ENCODE measurements at regions of chr22 and their contacts with region 1.

Region 1: DNA sequence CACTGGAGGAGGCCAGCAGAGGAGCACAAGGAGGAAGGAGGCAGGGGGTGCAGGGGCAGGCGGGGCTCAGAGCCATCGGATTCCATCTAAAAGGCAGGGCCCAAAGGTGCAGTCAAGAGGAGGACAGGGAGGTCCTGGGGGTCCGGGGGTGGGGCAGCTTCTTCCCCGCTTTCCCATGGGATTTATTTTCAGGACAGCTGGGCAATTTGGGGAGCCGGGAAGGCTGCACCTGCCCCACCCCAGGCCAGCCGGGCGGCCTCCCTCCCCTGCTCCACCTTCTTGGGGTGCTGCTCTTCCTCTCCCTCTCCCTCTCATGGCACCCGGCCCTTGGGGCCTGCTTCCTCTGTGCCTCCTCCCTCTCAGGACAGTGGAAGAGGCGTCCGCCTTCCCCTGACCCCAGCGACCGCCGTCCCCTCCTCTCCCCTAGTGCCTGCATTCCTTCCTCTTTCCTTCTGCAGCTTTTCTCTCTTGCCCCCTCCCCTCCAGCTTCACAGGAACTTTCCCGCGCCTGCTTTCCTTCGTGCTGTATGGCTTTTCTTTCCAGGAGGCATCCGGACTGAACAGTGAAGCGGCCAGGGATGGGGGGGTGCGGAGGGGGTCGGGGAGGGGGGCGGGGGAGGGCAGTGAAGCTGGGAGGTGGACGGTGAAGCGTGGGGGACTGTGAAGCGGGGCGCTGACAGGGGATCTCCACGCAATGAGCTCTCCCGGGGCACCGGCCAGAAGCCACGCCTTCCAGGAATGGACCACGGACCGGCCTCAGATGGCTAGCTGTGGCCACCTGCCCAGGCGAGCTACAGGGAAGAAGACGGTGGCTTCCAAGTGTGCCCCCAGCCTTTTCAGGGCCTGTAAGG is 26.9 kb downstream of the APOBEC3H start:
- DNase-seq: no peak
- H3K4me3 ChIP-seq: no peak overlapping the region
- H3K27ac ChIP-seq: no peak overlapping the region
- H3K27me3 ChIP-seq: no peaks in the 10 kb centered on the region
- CTCF ChIP-seq: no peak

Region 2: DNA sequence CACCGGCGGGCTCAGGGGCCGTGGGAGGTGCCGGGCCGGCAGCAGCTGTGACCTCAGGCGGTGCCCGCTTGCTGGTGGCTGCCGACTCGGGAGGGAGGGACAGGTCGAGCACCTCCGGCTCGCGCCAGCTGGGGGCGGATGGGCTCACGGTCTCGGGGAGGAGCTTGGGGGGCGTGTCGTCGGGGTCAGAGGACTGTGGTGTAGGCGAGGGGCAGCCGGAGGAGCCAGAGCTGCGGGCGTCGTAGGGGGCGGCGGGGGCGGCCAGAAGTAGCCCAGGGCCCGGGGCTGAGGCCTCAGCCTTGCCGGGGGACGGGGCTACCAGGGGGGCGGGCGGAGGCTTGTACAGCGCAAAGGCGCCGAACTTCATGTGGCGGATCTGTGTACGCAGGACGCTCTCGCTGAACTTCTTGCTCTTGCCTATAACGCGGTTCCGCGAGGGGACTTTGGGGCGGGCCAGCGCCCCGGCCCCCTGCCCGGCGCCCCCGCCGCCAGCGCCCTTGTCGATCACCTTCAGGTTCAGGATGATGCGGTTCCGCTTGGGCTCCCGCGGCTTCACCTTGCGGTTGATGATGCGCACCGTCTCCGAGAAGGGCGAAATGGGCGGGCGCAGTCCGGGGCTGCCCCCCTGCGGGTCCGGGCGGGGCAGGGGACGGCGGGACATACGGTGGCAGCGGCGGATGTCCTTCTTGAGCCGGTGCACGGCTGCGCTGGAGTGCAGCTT is 257.4 kb before region 1 on chr22:
- intact Hi-C with region 1: loop called in 1 of 2 experiments (anchors 2 kb)
- DNase-seq: peak in 2 of 10 donors; percentile 27 to 40
- H3K4me3 ChIP-seq: peak overlapping the region in 9 of 59 donors; percentile 3 to 35 (median 24)
- H3K27ac ChIP-seq: peak overlapping the region in 26 of 59 donors; percentile 23 to 86 (median 67)
- H3K27me3 ChIP-seq: no peaks in the 10 kb centered on the region
- CTCF ChIP-seq: no peak

Region 3: DNA sequence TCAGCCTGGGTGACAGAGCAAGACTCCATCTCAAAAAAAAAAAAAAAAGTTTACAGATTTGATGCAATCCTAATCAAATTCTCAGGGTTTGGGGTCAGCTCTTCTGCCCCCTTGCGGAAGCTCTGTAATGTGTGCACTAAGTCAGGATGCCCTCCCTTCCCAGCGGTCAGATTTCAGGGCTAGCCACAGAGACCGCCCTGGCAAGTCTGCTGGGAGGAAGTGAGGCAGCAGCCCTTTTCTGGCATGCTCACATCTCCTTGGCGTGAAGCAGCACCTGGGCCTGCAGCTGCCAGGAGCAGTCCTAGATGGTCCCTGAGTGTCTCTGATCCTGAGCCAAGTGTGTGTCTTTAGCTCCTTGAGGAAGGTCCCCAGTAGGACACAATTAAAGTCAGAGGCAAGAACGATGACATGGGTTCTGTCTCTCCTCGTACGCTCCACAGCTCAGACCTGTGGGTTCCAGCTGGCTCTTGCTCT is 120.8 kb before region 1 on chr22:
- intact Hi-C with region 1: loop called in 1 of 2 experiments (anchors 10 kb)
- DNase-seq: peak in 6 of 10 donors; percentile 37 to 62 (median 50)
- H3K4me3 ChIP-seq: no peak overlapping the region
- H3K27ac ChIP-seq: no peak overlapping the region
- H3K27me3 ChIP-seq: peaks cover 0 to 5% (median 0%) of the 10 kb centered on the region in 45 donors
- CTCF ChIP-seq: peak; percentile 40 to 82 (median 69)

Region 4: GRCh38 chr22:39405346-39406085 is 281.5 kb after region 1 on chr22:
- intact Hi-C with region 1: no loop called
- DNase-seq: peak; percentile 56 to 88 (median 80)
- H3K4me3 ChIP-seq: peak overlapping the region in 54 of 59 donors; percentile 0 to 55 (median 34)
- H3K27ac ChIP-seq: peak overlapping the region in 58 of 59 donors; percentile 36 to 90 (median 81)
- H3K27me3 ChIP-seq: no peaks in the 10 kb centered on the region
- CTCF ChIP-seq: peak in 38 of 56 donors; percentile 5 to 53 (median 28)